Dendritic cell treated with granulocyte-macrophage colony-stimulating factor and Interleukin-4, amounts not matched to agents 40 ng/mL and 50 ng/mL, for 4 days (primary cell): ENCODE measurements at regions of chr3 and their contacts with region 1.

Region 1: GRCh38 chr3:114152519-114153151 is 26.2 kb downstream of the DRD3 start:
- H3K4me3 Mint-ChIP-seq: peak overlapping the region; percentile 67
- H3K27ac Mint-ChIP-seq: no peak overlapping the region
- H3K4me1 Mint-ChIP-seq: peaks cover 4% of the 10 kb centered on the region
- H3K27me3 Mint-ChIP-seq: peaks cover 10% of the 10 kb centered on the region

Region 2: DNA sequence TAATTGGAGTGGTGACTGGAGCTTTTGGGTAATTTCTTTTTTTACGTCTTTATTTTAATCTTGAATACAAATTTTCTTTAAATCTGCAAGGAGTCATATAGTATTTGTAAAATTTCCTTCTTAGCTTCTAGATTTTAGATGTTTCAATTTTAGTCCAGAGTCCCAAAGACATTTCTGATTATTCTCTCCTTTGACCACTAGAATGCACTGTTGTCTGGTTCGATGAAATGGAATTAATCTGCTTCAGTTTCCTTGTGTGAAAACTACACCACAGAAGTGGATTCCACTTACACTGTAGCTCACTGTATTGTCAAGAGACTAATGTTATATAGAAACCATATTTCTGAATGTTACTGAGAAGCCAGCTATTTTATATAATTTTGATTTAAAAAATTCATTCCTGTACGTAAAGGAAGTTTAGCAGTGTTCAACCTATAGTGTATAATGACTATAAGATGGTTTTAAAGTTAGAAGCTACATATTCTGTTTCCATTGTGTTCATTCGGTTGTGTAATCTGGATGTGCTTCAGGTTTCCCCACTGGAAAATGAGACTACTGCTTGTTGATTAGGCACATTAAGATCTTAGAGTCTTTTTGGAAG is 307.9 kb before region 1 on chr3:
- intact Hi-C with region 1: loop called (anchors 5 kb)
- H3K4me3 Mint-ChIP-seq: no peak overlapping the region
- H3K27ac Mint-ChIP-seq: no peak overlapping the region
- H3K4me1 Mint-ChIP-seq: no peaks in the 10 kb centered on the region
- H3K27me3 Mint-ChIP-seq: no peaks in the 10 kb centered on the region

Region 3: DNA sequence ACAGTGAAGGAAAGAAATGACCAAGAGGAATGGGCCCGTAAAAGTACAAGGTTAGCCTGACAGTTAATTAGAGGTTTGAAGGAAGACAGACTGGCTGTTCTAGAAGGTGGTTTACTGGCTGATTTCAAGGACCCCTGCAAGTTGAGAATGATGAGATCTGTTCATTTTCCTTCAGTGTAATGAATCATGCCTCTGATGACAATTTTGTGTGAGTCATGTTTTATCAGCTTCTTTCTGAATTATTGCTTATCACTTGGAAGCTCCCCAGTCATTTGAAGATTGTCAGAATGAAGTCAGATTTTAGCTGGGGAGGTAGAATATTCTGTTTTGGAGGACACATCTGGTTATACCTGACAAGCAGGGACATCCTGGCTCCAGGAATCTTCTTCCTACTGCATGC is 24.4 kb before region 1 on chr3:
- intact Hi-C with region 1: no loop called
- H3K4me3 Mint-ChIP-seq: no peak overlapping the region
- H3K27ac Mint-ChIP-seq: no peak overlapping the region
- H3K4me1 Mint-ChIP-seq: no peaks in the 10 kb centered on the region
- H3K27me3 Mint-ChIP-seq: no peaks in the 10 kb centered on the region

Region 4: GRCh38 chr3:114192136-114192535 is 39.5 kb after region 1 on chr3:
- intact Hi-C with region 1: no loop called
- H3K4me3 Mint-ChIP-seq: no peak overlapping the region
- H3K27ac Mint-ChIP-seq: no peak overlapping the region
- H3K4me1 Mint-ChIP-seq: no peaks in the 10 kb centered on the region
- H3K27me3 Mint-ChIP-seq: no peaks in the 10 kb centered on the region

Region 5: GRCh38 chr3:114231616-114232015 is 79.0 kb after region 1 on chr3:
- intact Hi-C with region 1: no loop called
- H3K4me3 Mint-ChIP-seq: no peak overlapping the region
- H3K27ac Mint-ChIP-seq: no peak overlapping the region
- H3K4me1 Mint-ChIP-seq: no peaks in the 10 kb centered on the region
- H3K27me3 Mint-ChIP-seq: no peaks in the 10 kb centered on the region